ENCODE measurements at regions of chr22 and their contacts with region 1.

Region 1: GRCh38 chr22:43399338-43399979 is 12.4 kb upstream of the MPPED1 start:
- DNase-seq: peak; percentile 36
- ATAC-seq: no peak

Region 2: DNA sequence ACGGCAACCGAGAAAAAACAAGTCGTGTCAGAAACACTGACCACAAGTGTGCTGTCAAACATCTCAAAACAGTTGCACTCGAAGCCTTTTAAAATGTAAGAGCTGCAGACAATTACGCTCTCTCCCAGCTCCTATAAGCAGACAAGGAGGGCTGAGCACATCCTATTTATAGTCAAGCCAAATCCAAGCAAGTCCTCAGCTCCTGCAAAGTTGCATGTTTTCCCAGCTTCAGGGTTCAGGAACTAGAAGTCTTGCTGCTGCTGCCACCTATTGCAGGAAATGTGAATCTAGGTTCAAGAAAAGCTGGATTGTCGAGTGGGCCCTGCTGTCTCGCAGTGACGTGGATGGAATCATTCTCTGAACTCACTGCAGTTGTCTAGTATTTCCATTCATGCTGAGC is 397.1 kb after region 1 on chr22:
- intact Hi-C with region 1: loop called (anchors 10 kb)
- DNase-seq: no peak
- ATAC-seq: peak; percentile 90

Region 3: DNA sequence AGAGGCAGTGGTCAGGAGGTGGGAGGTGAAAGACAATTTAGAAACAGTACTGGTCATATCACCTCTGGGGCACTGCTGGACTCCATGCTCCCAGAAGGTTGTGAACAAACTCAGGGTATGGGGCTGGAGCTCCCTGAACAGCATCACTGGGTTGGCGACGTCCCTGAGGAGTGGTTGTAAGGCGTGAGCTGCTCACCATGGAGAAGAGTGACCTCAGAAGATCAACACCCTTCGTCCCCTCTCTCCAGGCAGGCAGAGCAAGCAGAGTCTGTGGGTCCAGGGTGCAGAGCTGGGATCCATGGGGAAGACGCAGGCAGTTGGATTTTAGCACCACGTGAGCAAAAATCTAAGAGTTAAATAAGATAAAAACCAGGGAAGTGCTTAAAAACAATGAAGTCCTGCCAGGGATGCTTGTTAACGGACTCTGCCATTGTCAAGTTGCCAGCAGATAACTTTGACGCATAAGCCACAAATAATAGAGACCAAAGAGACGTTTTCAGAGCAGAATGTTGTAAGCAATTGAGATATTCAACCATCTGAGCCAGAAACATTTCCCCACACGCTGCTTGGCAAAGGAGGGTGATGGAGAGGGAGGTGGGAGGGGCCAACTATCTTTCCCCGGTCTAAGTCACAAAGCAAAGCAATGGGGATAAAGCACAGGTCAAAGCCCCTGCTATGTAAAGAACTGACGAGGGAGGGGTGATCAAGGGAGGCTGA is 478.8 kb after region 1 on chr22:
- intact Hi-C with region 1: loop called (anchors 10 kb)
- DNase-seq: no peak
- ATAC-seq: no peak

Measured in Right ventricle myocardium superior (tissue), 1 donor.